MCF 10A (cell line): ENCODE measurements at regions of chr11 and their contacts with region 1.

Region 1: DNA sequence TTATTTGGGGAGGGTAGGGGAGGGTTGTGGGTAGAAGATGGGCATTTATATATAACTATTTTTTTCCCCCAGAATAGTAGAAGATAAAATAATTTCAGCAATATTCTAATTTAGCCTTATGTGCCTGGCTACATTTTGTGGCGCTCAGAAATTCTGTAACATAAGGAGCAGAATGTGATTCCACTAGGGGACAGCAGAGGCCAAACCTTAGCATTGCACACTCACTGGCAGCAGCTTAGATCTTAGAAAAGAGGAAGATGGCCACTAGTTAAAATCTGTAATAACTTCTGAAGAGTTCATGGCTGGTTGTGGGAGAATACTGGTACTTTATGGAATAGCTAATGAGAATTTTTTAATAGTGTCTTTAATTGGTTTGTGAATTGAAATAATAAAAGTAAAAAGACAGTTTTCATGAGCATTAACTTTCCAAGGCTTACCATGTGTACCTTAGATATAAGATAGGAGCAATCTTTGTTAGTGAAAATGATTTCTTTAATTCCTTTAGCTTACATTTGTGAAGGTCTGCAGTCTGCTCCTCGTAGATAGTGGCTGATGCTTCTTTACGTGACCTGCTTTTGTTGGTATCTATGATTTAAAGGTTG is 33.1 kb downstream of the DDX10 start:
- DNase-seq: peak; percentile 78
- H3K4me3 Mint-ChIP-seq: no peak overlapping the region
- H3K27ac Mint-ChIP-seq: peak overlapping the region; percentile 82
- H3K4me1 Mint-ChIP-seq: peaks cover 17% of the 10 kb centered on the region
- H3K27me3 Mint-ChIP-seq: no peaks in the 10 kb centered on the region
- CTCF ChIP-seq: peak; percentile 93

Region 2: GRCh38 chr11:108685419-108686130 is 12.4 kb before region 1 on chr11:
- CTCF ChIA-PET with region 1: no interaction called
- POLR2A ChIA-PET with region 1: no interaction called
- intact Hi-C with region 1: no loop called
- DNase-seq: no peak
- H3K4me3 Mint-ChIP-seq: no peak overlapping the region
- H3K27ac Mint-ChIP-seq: no peak overlapping the region
- H3K4me1 Mint-ChIP-seq: no peaks in the 10 kb centered on the region
- H3K27me3 Mint-ChIP-seq: no peaks in the 10 kb centered on the region
- CTCF ChIP-seq: no peak

Region 3: GRCh38 chr11:108871152-108871551 is 173.2 kb after region 1 on chr11:
- CTCF ChIA-PET with region 1: interaction called, 5 read pairs
- POLR2A ChIA-PET with region 1: no interaction called
- intact Hi-C with region 1: loop called (anchors 1 kb)
- DNase-seq: peak; percentile 67
- H3K4me3 Mint-ChIP-seq: no peak overlapping the region
- H3K27ac Mint-ChIP-seq: peak overlapping the region; percentile 29
- H3K4me1 Mint-ChIP-seq: peaks cover 32% of the 10 kb centered on the region
- H3K27me3 Mint-ChIP-seq: no peaks in the 10 kb centered on the region
- CTCF ChIP-seq: peak; percentile 53

Region 4: DNA sequence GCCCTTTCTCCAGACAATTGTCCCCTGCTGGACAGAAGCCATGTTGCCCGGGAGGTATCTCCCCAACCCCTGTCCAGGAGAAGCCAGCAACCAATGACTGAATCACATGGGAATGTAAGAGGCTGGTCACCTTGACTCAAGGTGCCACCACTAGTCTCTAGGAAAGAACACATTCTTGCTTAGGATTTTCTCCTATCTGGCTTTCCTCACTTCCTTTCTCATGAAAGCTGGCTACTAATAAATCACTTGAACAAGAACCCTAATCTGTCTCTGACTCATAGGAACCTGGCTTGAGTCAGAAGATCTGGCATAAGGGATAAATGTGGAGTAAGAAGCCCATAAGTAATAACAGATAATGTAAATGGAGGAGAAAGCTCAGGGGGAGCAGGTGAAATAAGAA is 622.6 kb after region 1 on chr11:
- CTCF ChIA-PET with region 1: interaction called, 3 read pairs
- POLR2A ChIA-PET with region 1: no interaction called
- intact Hi-C with region 1: loop called (anchors 10 kb)
- DNase-seq: peak; percentile 67
- H3K4me3 Mint-ChIP-seq: no peak overlapping the region
- H3K27ac Mint-ChIP-seq: no peak overlapping the region
- H3K4me1 Mint-ChIP-seq: peaks cover 11% of the 10 kb centered on the region
- H3K27me3 Mint-ChIP-seq: no peaks in the 10 kb centered on the region
- CTCF ChIP-seq: no peak

Region 5: GRCh38 chr11:109853156-109853776 is 1155.3 kb after region 1 on chr11:
- CTCF ChIA-PET with region 1: interaction called, 9 read pairs
- POLR2A ChIA-PET with region 1: interaction called, 14 read pairs
- intact Hi-C with region 1: loop called (anchors 2 kb)
- DNase-seq: peak; percentile 73
- H3K4me3 Mint-ChIP-seq: no peak overlapping the region
- H3K27ac Mint-ChIP-seq: no peak overlapping the region
- H3K4me1 Mint-ChIP-seq: peaks cover 8% of the 10 kb centered on the region
- H3K27me3 Mint-ChIP-seq: no peaks in the 10 kb centered on the region
- CTCF ChIP-seq: peak; percentile 63

Region 6: DNA sequence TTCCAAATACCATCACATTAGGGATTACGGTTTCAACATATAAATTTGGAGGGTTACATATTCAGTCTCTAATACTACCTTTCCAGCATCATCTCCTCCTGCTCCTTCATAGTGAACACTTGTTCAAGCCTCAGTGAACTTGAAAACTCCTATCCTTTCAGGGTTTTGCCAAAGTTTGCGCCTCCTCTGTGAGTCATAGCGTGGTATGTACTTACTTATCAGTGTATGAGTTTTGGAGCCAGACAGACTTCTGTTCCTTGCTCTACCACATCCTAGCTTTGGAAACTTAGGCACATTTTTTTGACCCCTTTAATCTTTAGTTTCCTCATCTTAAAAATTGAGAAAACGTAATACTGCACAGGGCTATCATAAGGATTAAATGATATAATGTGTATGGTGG is 1235.2 kb after region 1 on chr11:
- CTCF ChIA-PET with region 1: interaction called, 11 read pairs
- POLR2A ChIA-PET with region 1: interaction called, 4 read pairs
- intact Hi-C with region 1: no loop called
- DNase-seq: no peak
- H3K4me3 Mint-ChIP-seq: no peak overlapping the region
- H3K27ac Mint-ChIP-seq: no peak overlapping the region
- H3K4me1 Mint-ChIP-seq: no peaks in the 10 kb centered on the region
- H3K27me3 Mint-ChIP-seq: no peaks in the 10 kb centered on the region
- CTCF ChIP-seq: no peak